B cell (primary cell): ENCODE measurements at regions of chr2 and their contacts with region 1.

Region 1: DNA sequence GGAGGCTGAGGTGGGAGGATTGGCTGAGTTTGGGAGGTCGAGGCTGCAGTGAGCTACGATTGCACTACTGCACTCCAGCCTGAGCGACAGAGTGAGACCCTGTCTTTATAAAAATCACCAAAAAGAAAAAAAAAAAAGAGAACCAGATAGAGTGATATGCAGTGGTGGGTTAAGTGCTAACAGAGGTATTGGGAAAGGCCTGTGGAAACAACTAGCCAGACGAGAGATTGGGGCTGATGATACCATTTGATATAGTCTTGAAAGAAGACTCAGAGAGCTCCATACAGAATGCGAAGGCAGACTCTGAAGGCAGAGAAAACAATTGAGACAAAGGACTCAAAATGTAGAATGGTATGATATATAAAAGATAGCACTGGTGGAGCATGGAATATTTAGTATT is 134.1 kb downstream of the CDC42EP3 start:
- DNase-seq: no peak
- ATAC-seq: no peak
- H3K4me3 ChIP-seq: no peak overlapping the region
- H3K4me3 Mint-ChIP-seq: no peak overlapping the region
- H3K27ac ChIP-seq: no peak overlapping the region
- H3K27ac Mint-ChIP-seq: no peak overlapping the region
- H3K4me1 ChIP-seq: no peaks in the 10 kb centered on the region
- H3K4me1 Mint-ChIP-seq: peaks cover 4% of the 10 kb centered on the region
- H3K27me3 ChIP-seq: no peaks in the 10 kb centered on the region
- H3K27me3 Mint-ChIP-seq: peaks cover 6% of the 10 kb centered on the region
- CTCF ChIP-seq: no peak

Region 2: GRCh38 chr2:37441055-37441454 is 96.3 kb before region 1 on chr2:
- CTCF ChIA-PET with region 1: no interaction called
- POLR2A ChIA-PET with region 1: no interaction called
- intact Hi-C with region 1: no loop called
- DNase-seq: no peak
- ATAC-seq: no peak
- H3K4me3 ChIP-seq: no peak overlapping the region
- H3K4me3 Mint-ChIP-seq: no peak overlapping the region
- H3K27ac ChIP-seq: no peak overlapping the region
- H3K27ac Mint-ChIP-seq: no peak overlapping the region
- H3K4me1 ChIP-seq: no peaks in the 10 kb centered on the region
- H3K4me1 Mint-ChIP-seq: no peaks in the 10 kb centered on the region
- H3K27me3 ChIP-seq: peaks cover 0 to 3% (median 0%) of the 10 kb centered on the region in 4 experiments
- H3K27me3 Mint-ChIP-seq: peaks cover 17% of the 10 kb centered on the region
- CTCF ChIP-seq: no peak

Region 3: GRCh38 chr2:37672104-37672869 is 135.0 kb after region 1 on chr2:
- CTCF ChIA-PET with region 1: interaction called, 3 read pairs
- POLR2A ChIA-PET with region 1: interaction called, 12 read pairs
- intact Hi-C with region 1: no loop called
- DNase-seq: peak; percentile 86
- ATAC-seq: peak; percentile 48
- H3K4me3 ChIP-seq: peak overlapping the region; percentile 44 to 92 (median 84)
- H3K4me3 Mint-ChIP-seq: peak overlapping the region; percentile 98
- H3K27ac ChIP-seq: peak overlapping the region; percentile 81 to 83
- H3K27ac Mint-ChIP-seq: peak overlapping the region; percentile 95
- H3K4me1 ChIP-seq: peaks cover 31 to 38% of the 10 kb centered on the region in 2 donors
- H3K4me1 Mint-ChIP-seq: peaks cover 52% of the 10 kb centered on the region
- H3K27me3 ChIP-seq: no peaks in the 10 kb centered on the region
- H3K27me3 Mint-ChIP-seq: no peaks in the 10 kb centered on the region
- CTCF ChIP-seq: no peak

Region 4: GRCh38 chr2:37819186-37819585 is 281.9 kb after region 1 on chr2:
- CTCF ChIA-PET with region 1: no interaction called
- POLR2A ChIA-PET with region 1: no interaction called
- intact Hi-C with region 1: no loop called
- DNase-seq: no peak
- ATAC-seq: no peak
- H3K4me3 ChIP-seq: no peak overlapping the region
- H3K4me3 Mint-ChIP-seq: no peak overlapping the region
- H3K27ac ChIP-seq: no peak overlapping the region
- H3K27ac Mint-ChIP-seq: no peak overlapping the region
- H3K4me1 ChIP-seq: peaks cover 7 to 9% of the 10 kb centered on the region in 2 donors
- H3K4me1 Mint-ChIP-seq: peaks cover 8% of the 10 kb centered on the region
- H3K27me3 ChIP-seq: no peaks in the 10 kb centered on the region
- H3K27me3 Mint-ChIP-seq: no peaks in the 10 kb centered on the region
- CTCF ChIP-seq: no peak